Psoas muscle (tissue), 8 donors: ENCODE measurements at regions of chr18 and their contacts with region 1.

Region 1: DNA sequence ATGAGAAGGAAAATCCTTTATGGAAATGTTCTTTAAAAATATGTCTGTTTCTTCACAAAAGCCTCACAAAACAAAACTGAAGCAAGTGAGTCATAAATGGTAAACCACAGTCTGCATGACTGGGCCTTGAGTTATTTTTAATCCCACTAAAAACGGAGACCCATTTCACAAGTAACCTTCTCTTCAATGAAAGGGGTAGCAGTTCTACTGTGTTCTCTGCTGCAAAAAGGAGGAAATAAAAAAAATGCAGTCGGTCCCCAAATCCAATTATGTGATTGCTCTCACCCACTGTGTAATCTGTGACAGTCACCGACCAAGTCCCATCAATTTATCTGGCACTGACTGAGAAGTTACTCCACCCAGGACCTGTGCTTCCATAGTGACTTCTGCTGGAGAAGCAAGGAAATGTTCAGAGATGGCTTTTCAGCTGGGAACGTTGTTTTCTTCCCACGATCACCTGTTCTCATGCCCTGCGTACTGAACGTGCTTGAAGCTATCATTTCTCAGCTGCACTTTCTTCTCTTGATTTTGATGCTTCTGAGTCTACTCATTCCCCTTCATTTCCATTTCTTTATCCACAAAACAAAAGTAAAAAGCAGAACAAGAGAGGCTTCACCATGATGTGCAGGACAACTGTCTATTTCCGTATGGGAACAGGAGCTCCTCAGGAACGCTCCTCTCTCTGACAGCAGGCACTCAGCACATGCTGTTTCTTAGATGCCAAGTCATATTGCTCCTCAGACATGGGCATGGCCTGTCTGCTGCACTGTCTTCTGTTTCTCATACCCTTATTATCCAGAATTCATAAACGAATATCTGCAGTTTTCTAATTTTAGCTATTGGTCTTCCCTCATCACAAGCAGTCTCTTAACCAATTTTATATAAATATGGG is 80.0 kb upstream of the TMEM200C start:
- DNase-seq: no peak
- ATAC-seq: no peak
- H3K4me3 ChIP-seq: no peak overlapping the region
- H3K27ac ChIP-seq: no peak overlapping the region
- H3K4me1 ChIP-seq: no peaks in the 10 kb centered on the region
- H3K27me3 ChIP-seq: no peaks in the 10 kb centered on the region
- CTCF ChIP-seq: no peak

Region 2: DNA sequence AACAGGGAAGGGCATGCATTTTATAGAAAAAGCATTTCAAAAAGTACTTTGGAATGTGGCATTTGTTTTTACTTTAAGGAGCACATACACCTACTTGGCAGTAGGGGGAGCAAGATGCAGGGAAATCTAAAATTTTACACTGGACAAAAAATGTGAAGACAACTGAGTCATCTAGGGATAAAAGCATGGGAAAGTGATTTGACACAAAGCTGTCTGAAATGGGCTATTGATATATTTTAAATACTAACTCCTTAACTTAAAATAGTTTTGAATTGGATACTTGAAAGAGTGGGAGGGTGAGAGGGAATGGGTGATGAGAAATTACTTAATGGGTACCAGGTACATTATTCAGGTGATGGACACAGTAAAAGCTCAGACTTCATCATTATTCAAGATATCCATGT is 95.9 kb before region 1 on chr18:
- intact Hi-C with region 1: no loop called
- DNase-seq: no peak
- ATAC-seq: peak in 1 of 4 donors; percentile 45
- H3K4me3 ChIP-seq: no peak overlapping the region
- H3K27ac ChIP-seq: no peak overlapping the region
- H3K4me1 ChIP-seq: no peaks in the 10 kb centered on the region
- H3K27me3 ChIP-seq: peaks cover 0 to 2% (median 0%) of the 10 kb centered on the region in 3 donors
- CTCF ChIP-seq: peak; percentile 60

Region 3: DNA sequence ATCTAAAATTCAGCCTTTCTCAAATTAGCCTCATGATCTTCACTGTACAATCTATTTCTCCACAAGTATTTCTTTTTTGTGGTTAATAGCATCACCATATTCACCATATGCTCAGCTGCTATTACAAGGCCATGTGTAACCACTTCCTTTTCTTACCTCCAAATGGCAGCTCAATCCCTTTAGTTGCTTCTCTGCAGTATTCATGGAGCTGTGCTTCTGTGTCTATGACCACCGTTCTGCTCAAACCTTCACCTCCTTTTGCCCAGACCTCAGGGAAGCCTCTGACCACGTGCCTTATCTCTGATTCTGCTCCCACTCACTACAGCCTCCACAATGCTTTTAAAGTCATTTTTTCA is 46.7 kb after region 1 on chr18:
- intact Hi-C with region 1: no loop called
- DNase-seq: no peak
- ATAC-seq: no peak
- H3K4me3 ChIP-seq: no peak overlapping the region
- H3K27ac ChIP-seq: no peak overlapping the region
- H3K4me1 ChIP-seq: no peaks in the 10 kb centered on the region
- H3K27me3 ChIP-seq: no peaks in the 10 kb centered on the region
- CTCF ChIP-seq: no peak

Region 4: GRCh38 chr18:6039055-6039454 is 63.7 kb after region 1 on chr18:
- intact Hi-C with region 1: loop called in 1 of 2 experiments (anchors 10 kb)
- DNase-seq: no peak
- ATAC-seq: no peak
- H3K4me3 ChIP-seq: no peak overlapping the region
- H3K27ac ChIP-seq: no peak overlapping the region
- H3K4me1 ChIP-seq: no peaks in the 10 kb centered on the region
- H3K27me3 ChIP-seq: no peaks in the 10 kb centered on the region
- CTCF ChIP-seq: no peak

Region 5: DNA sequence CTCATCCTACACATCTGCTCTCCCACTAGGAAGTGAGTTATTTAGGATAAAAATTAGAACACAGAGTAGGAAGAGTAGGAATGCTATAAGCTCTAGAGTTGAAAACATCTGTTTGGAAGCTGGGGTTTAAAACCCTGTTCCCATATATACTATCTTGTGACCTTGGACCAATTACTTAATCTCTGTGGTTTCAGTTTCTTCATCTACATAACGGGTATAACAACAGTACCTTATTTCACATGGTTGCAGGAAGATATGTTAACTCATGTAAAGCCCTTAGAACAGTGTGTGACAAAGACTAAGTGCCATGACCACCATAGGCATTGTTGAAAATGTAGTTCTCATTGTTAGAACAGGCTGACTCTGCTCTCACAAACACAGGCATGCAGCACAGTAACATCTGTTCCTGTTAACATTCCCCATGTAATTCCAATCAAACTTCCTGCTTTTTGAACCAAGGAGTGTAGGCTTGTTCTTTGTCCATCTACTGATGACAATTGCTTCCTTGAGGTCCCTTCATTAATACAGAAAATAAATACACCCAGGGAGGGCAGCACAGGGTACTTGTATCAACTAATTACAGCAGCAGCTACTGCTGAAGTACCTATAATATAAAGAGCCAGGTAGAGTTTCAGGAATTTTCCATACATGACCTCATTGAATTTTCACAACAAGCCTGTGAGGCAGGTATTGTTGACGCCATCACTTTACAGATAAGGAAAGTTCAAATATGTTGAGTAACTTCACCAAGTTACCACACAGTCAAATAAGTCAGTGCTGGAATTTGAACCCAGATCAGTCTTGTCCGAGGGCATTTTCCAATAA is 235.2 kb after region 1 on chr18:
- intact Hi-C with region 1: no loop called
- DNase-seq: no peak
- ATAC-seq: no peak
- H3K4me3 ChIP-seq: no peak overlapping the region
- H3K27ac ChIP-seq: no peak overlapping the region
- H3K4me1 ChIP-seq: no peaks in the 10 kb centered on the region
- H3K27me3 ChIP-seq: no peaks in the 10 kb centered on the region
- CTCF ChIP-seq: no peak

Region 6: GRCh38 chr18:7303316-7304060 is 1328.1 kb after region 1 on chr18:
- intact Hi-C with region 1: no loop called
- DNase-seq: no peak
- ATAC-seq: no peak
- H3K4me3 ChIP-seq: no peak overlapping the region
- H3K27ac ChIP-seq: no peak overlapping the region
- H3K4me1 ChIP-seq: no peaks in the 10 kb centered on the region
- H3K27me3 ChIP-seq: no peaks in the 10 kb centered on the region
- CTCF ChIP-seq: no peak